ENCODE measurements at regions of chr9 and their contacts with region 1.

Region 1: GRCh38 chr9:124940693-124941453 is at the start of gene GOLGA1:
- DNase-seq: peak; percentile 94
- ATAC-seq: peak; percentile 90
- H3K4me3 Mint-ChIP-seq: peak within 1 kb of the TSS; percentile 90
- H3K27ac Mint-ChIP-seq: peak within 1 kb of the TSS; percentile 94
- H3K4me1 Mint-ChIP-seq: peaks cover 21% of the 10 kb centered on the region
- H3K27me3 Mint-ChIP-seq: no peaks in the 10 kb centered on the region
- total RNA-seq, gene GOLGA1: 14.0 to 16.2 TPM

Region 2: DNA sequence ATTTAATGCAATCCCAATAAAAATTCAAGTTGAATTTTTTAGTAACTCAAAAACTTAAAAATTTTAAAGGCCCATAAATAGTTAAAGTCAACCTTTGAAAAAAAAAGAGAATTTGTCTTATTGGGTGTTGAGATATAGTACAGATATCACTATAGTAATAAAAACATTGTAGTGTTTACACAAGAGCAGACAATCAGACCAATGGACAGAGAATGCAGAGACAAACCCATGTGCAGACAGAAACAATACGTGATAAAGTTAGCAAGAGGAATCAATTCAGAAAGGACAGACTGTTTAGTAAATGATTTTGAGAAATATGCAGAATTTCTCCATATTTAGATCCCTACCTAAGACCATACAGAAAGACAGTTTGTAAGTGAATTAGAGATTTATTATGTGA is 33.9 kb before region 1 on chr9:
- CTCF ChIA-PET with region 1: no interaction called
- POLR2A ChIA-PET with region 1: no interaction called
- DNase-seq: no peak
- ATAC-seq: no peak
- H3K4me3 Mint-ChIP-seq: no peak overlapping the region
- H3K27ac Mint-ChIP-seq: no peak overlapping the region
- H3K4me1 Mint-ChIP-seq: no peaks in the 10 kb centered on the region
- H3K27me3 Mint-ChIP-seq: no peaks in the 10 kb centered on the region

Region 3: DNA sequence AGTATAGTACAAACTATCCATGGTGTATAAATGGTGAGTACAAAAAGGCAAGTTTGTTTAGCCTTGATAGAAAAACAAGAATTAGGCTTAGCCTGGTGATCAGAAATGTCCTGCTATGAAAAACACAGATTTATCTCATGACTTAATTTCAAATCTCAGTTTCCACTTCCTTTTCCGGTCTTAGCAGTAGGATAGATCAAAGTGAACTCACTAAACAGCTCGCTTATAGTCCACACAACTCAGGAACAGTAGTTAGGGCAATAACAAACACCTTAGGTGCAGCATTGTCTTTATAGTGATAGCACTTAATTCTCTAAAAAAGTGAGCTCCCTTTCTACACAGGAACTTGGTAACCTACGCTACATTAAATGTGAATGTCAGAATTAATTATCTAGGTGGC is 11.4 kb before region 1 on chr9:
- CTCF ChIA-PET with region 1: interaction called, 12 read pairs
- POLR2A ChIA-PET with region 1: interaction called, 4 read pairs
- DNase-seq: no peak
- ATAC-seq: no peak
- H3K4me3 Mint-ChIP-seq: no peak overlapping the region
- H3K27ac Mint-ChIP-seq: no peak overlapping the region
- H3K4me1 Mint-ChIP-seq: peaks cover 5% of the 10 kb centered on the region
- H3K27me3 Mint-ChIP-seq: no peaks in the 10 kb centered on the region

Region 4: DNA sequence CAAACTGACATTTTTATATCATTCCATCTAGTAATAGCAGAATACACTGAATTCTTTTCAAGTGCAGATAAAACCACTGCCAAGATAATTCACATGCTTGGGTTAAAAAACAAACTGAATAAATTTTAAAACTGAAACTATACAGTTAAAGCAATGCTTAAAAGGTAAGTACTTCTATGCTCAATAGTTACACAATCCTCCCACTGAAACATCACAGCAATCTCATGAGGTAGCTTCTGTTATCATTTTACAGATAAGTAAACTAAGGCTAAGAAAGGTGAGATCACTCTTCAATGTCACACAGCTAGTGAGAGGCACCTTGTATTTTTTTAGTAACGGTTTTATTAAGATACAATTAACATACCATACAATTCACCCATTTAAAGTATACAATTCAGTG is 13.4 kb after region 1 on chr9:
- CTCF ChIA-PET with region 1: no interaction called
- POLR2A ChIA-PET with region 1: no interaction called
- DNase-seq: no peak
- ATAC-seq: no peak
- H3K4me3 Mint-ChIP-seq: no peak overlapping the region
- H3K27ac Mint-ChIP-seq: no peak overlapping the region
- H3K4me1 Mint-ChIP-seq: no peaks in the 10 kb centered on the region
- H3K27me3 Mint-ChIP-seq: no peaks in the 10 kb centered on the region

Region 5: GRCh38 chr9:124964604-124965003 is 23.7 kb after region 1 on chr9:
- CTCF ChIA-PET with region 1: interaction called, 3 read pairs
- POLR2A ChIA-PET with region 1: interaction called, 15 read pairs
- DNase-seq: no peak
- ATAC-seq: no peak
- H3K4me3 Mint-ChIP-seq: no peak overlapping the region
- H3K27ac Mint-ChIP-seq: peak overlapping the region; percentile 61
- H3K4me1 Mint-ChIP-seq: peaks cover 33% of the 10 kb centered on the region
- H3K27me3 Mint-ChIP-seq: no peaks in the 10 kb centered on the region

Measured in activated CD8-positive, alpha-beta T cell treated with anti-CD3 and anti-CD28 coated beads, Interleukin-2, amount 10 ng/mL, durations not matched to agents 7 days and 5 days (primary cell).